ENCODE measurements at regions of chr13 and their contacts with region 1.

Region 1: GRCh38 chr13:99386911-99387788 is 80.0 kb upstream of the GPR183 start:
- DNase-seq: peak; percentile 81
- ATAC-seq: peak; percentile 78
- H3K4me3 Mint-ChIP-seq: peak overlapping the region; percentile 12
- H3K27ac Mint-ChIP-seq: peak overlapping the region; percentile 84
- H3K4me1 Mint-ChIP-seq: peaks cover 43% of the 10 kb centered on the region
- H3K27me3 Mint-ChIP-seq: no peaks in the 10 kb centered on the region
- CTCF ChIP-seq: peak; percentile 94

Region 2: GRCh38 chr13:99176309-99177276 is 210.6 kb before region 1 on chr13:
- CTCF ChIA-PET with region 1: interaction called, 5 read pairs
- POLR2A ChIA-PET with region 1: interaction called, 3 read pairs
- intact Hi-C with region 1: loop called (anchors 1 kb)
- DNase-seq: peak; percentile 64
- ATAC-seq: peak; percentile 90
- H3K4me3 Mint-ChIP-seq: peak overlapping the region; percentile 58
- H3K27ac Mint-ChIP-seq: peak overlapping the region; percentile 24
- H3K4me1 Mint-ChIP-seq: peaks cover 43% of the 10 kb centered on the region
- H3K27me3 Mint-ChIP-seq: peaks cover 2% of the 10 kb centered on the region
- CTCF ChIP-seq: no peak

Region 3: GRCh38 chr13:99322297-99323103 is 64.7 kb before region 1 on chr13:
- CTCF ChIA-PET with region 1: interaction called, 3 read pairs
- POLR2A ChIA-PET with region 1: interaction called, 8 read pairs
- intact Hi-C with region 1: loop called (anchors 1 kb)
- DNase-seq: no peak
- ATAC-seq: peak; percentile 87
- H3K4me3 Mint-ChIP-seq: peak overlapping the region; percentile 56
- H3K27ac Mint-ChIP-seq: peak overlapping the region; percentile 91
- H3K4me1 Mint-ChIP-seq: peaks cover 66% of the 10 kb centered on the region
- H3K27me3 Mint-ChIP-seq: no peaks in the 10 kb centered on the region
- CTCF ChIP-seq: no peak

Region 4: DNA sequence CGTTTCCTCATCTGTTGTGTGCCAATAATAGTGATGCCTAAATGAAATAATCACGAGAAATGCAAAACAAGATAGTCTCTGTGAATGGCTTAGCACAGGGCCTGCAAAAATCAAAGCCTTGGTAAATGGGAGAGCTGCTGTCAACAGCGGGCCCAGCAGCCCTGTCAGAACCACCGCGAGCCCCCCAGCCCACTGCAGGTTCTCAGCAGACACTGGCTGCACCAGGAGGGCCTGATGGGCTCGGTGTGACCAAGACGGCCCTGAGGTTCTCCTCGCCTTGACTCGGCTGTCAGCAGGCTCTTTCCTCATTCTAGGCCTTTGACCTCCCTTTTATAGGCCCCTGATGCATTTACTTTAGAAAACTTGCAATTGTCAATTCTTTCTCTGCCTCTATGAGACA is 10.9 kb after region 1 on chr13:
- CTCF ChIA-PET with region 1: no interaction called
- POLR2A ChIA-PET with region 1: no interaction called
- intact Hi-C with region 1: no loop called
- DNase-seq: no peak
- ATAC-seq: no peak
- H3K4me3 Mint-ChIP-seq: no peak overlapping the region
- H3K27ac Mint-ChIP-seq: no peak overlapping the region
- H3K4me1 Mint-ChIP-seq: no peaks in the 10 kb centered on the region
- H3K27me3 Mint-ChIP-seq: no peaks in the 10 kb centered on the region
- CTCF ChIP-seq: no peak

Region 5: GRCh38 chr13:99419591-99420243 is 32.6 kb after region 1 on chr13:
- CTCF ChIA-PET with region 1: interaction called, 12 read pairs
- POLR2A ChIA-PET with region 1: interaction called, 5 read pairs
- intact Hi-C with region 1: loop called (anchors 1 kb)
- DNase-seq: no peak
- ATAC-seq: no peak
- H3K4me3 Mint-ChIP-seq: peak overlapping the region; percentile 80
- H3K27ac Mint-ChIP-seq: peak overlapping the region; percentile 96
- H3K4me1 Mint-ChIP-seq: peaks cover 72% of the 10 kb centered on the region
- H3K27me3 Mint-ChIP-seq: no peaks in the 10 kb centered on the region
- CTCF ChIP-seq: no peak

Region 6: DNA sequence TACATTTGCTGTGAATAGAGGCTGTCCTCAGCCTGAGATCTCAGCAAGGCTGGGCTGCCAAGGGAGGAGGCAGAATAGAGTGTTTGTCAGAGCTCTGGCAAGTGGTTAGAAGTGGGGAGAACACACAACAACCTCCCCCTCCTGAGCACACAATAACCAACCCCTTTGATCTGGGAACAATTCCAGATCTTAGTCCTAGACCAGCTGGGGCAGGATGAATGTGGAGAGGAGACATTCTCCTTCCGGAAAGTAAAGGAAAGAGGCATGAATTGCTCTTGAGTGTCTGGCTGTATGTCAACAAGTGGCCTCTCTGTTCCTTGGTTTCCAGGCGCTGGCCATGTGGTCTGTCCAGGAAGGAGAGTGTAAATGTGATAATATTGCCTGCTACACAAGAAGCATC is 1402.3 kb after region 1 on chr13:
- CTCF ChIA-PET with region 1: no interaction called
- POLR2A ChIA-PET with region 1: no interaction called
- intact Hi-C with region 1: no loop called
- DNase-seq: no peak
- ATAC-seq: no peak
- H3K4me3 Mint-ChIP-seq: no peak overlapping the region
- H3K27ac Mint-ChIP-seq: no peak overlapping the region
- H3K4me1 Mint-ChIP-seq: no peaks in the 10 kb centered on the region
- H3K27me3 Mint-ChIP-seq: peaks cover 7% of the 10 kb centered on the region
- CTCF ChIP-seq: no peak

Measured in activated B cell treated with CpG ODN at 0.5 μM for 24 hours (primary cell).